OCI-LY7 (cell line): ENCODE measurements at regions of chr11 and their contacts with region 1.

Region 1: GRCh38 chr11:10429526-10429925 is 25.5 kb upstream of the AMPD3 start:
- DNase-seq: no peak
- H3K4me3 ChIP-seq: no peak overlapping the region
- H3K27ac ChIP-seq: no peak overlapping the region
- H3K4me1 ChIP-seq: no peaks in the 10 kb centered on the region
- CTCF ChIP-seq: no peak

Region 2: GRCh38 chr11:10441652-10442503 is 12.4 kb after region 1 on chr11:
- CTCF ChIA-PET with region 1: interaction called, 5 read pairs
- POLR2A ChIA-PET with region 1: interaction called, 13 read pairs
- intact Hi-C with region 1: no loop called
- DNase-seq: peak; percentile 56
- H3K4me3 ChIP-seq: peak overlapping the region; percentile 24
- H3K27ac ChIP-seq: peak overlapping the region; percentile 52
- H3K4me1 ChIP-seq: peaks cover 32% of the 10 kb centered on the region
- CTCF ChIP-seq: no peak

Region 3: GRCh38 chr11:10478574-10479550 is 49.3 kb after region 1 on chr11:
- CTCF ChIA-PET with region 1: no interaction called
- POLR2A ChIA-PET with region 1: no interaction called
- intact Hi-C with region 1: no loop called
- DNase-seq: no peak
- H3K4me3 ChIP-seq: no peak overlapping the region
- H3K27ac ChIP-seq: no peak overlapping the region
- H3K4me1 ChIP-seq: no peaks in the 10 kb centered on the region
- CTCF ChIP-seq: no peak

Region 4: DNA sequence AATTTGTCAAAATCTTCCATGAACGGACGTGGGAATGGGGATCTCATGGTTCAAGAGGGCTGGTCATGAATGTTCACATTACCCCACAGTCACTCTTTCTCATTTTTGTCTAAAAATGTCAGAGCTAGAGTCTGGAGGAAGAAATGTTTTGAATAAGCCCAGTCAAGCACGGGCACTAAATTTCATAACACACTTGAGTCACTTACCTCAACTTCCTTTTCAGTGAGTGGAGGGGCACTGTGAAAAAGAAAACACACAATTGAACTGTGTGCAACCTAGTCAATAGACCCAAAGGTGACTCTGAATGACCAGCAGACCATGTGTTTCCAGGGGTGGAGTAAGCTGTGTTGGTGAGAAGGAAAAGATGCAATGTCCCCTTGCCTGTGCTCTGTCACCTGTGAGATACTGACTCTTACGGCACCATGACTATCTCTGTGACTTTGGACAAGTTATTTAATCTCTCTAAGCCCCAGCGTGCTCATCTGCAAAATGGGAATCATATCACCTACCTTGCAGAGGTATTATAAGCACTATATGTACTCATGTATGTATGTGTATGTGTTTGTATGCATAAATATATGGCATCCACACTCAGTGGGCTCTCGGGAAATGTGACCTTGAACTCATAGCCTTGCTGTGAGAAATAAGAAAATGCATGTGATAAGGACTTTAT is 177.1 kb after region 1 on chr11:
- CTCF ChIA-PET with region 1: no interaction called
- POLR2A ChIA-PET with region 1: no interaction called
- intact Hi-C with region 1: no loop called
- DNase-seq: no peak
- H3K4me3 ChIP-seq: no peak overlapping the region
- H3K27ac ChIP-seq: no peak overlapping the region
- H3K4me1 ChIP-seq: no peaks in the 10 kb centered on the region
- CTCF ChIP-seq: no peak

Region 5: GRCh38 chr11:10750838-10751580 is 321.5 kb after region 1 on chr11 and contains the start of gene CTR9:
- CTCF ChIA-PET with region 1: no interaction called
- POLR2A ChIA-PET with region 1: no interaction called
- intact Hi-C with region 1: no loop called
- DNase-seq: peak; percentile 93
- H3K4me3 ChIP-seq: peak within 1 kb of the TSS; percentile 95
- H3K27ac ChIP-seq: peak within 1 kb of the TSS; percentile 72
- H3K4me1 ChIP-seq: peaks cover 13% of the 10 kb centered on the region
- CTCF ChIP-seq: peak; percentile 42; the same call in 1 of the 2 replicates
- total RNA-seq, gene CTR9: 15.3 and 19.3 TPM in 2 replicates